SK-N-SH (cell line): ENCODE measurements at regions of chr1 and their contacts with region 1.

Region 1: GRCh38 chr1:40143891-40144575 is 17.2 kb upstream of the RLF start:
- DNase-seq: peak; percentile 60
- H3K4me3 ChIP-seq: no peak overlapping the region; a peak in 2 of 4 replicates
- H3K27ac ChIP-seq: no peak overlapping the region
- H3K4me1 ChIP-seq: peaks cover 0 to 8% of the 10 kb centered on the region in 2 experiments; a peak in 1 of 4 replicates
- H3K27me3 ChIP-seq: no peaks in the 10 kb centered on the region; the same call in 1 of the 2 replicates
- CTCF ChIP-seq: peak; percentile 81
- EP300 ChIP-seq: no peak
- RAD21 ChIP-seq: peak; percentile 88

Region 2: DNA sequence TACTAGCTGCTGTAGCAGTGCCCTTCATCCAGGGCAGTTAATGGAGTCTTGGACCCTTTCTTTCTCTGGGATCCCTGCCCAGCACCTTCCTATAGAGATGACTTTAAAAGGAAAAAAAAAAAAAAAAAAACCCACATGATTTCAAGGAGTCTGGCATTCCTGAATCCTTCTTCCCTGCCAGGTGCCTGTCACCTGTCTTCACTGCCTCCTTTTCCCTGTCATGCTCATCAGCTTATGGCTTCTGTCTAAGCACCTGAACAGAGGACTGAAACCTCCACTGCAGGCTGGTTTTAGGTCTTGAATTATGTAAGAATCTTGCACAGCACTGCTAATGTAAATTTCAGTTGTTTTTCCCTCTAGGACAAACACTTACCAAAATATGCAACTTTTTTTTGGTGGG is 71.9 kb before region 1 on chr1:
- CTCF ChIA-PET with region 1: interaction called, 11 read pairs
- POLR2A ChIA-PET with region 1: no interaction called
- DNase-seq: no peak
- H3K4me3 ChIP-seq: no peak overlapping the region
- H3K27ac ChIP-seq: no peak overlapping the region
- H3K4me1 ChIP-seq: peaks cover 0 to 4% of the 10 kb centered on the region in 2 experiments; a peak in 1 of 4 replicates
- H3K27me3 ChIP-seq: no peaks in the 10 kb centered on the region
- CTCF ChIP-seq: no peak
- EP300 ChIP-seq: no peak
- RAD21 ChIP-seq: no peak

Region 3: DNA sequence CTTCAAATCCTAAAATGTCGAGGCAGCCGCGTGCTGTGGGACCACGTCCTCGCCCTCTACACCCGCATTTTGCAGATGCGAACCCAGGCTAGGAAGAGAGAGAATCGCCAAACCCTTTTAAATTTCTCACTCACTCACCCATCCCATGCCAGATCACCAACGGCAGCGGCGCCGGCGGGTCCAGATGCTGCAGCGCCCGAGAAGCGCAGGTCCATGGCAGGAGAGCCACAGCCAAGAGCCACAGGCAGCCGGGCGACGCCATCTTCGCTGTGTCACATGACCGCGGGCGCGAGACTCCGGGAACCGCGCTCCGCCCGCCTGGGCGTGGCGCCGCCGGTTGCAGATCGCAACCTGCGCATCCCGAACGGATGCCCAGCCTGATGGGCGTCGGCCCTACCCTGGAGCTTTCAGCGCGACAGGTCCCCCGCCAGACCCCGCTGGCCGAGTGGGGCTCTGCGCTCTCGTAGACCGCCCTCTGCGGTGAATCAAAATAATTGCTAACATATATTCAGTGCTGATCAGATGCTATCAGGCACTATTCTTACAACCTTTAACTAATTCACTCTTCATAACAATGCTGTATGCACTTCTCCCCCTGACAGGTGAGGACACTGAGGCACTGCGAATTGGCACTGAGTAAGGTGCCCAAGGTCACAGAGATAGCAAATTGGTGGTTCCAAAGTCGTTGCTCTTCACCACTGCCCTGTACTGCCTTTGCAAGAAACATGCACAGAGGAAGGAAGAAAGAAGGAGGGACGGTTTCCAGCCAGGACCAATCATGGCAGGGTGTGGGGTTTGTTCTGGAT is 46.9 kb before region 1 on chr1 and contains the start of gene PPT1:
- CTCF ChIA-PET with region 1: interaction called, 14 read pairs
- POLR2A ChIA-PET with region 1: no interaction called
- DNase-seq: peak; percentile 90
- H3K4me3 ChIP-seq: peak within 1 kb of the TSS; percentile 85 to 92
- H3K27ac ChIP-seq: peak within 1 kb of the TSS in 1 of 2 experiments; percentile 78; a peak in 3 of 4 replicates
- H3K4me1 ChIP-seq: peaks cover 0 to 12% of the 10 kb centered on the region in 2 experiments; a peak in 2 of 4 replicates
- H3K27me3 ChIP-seq: no peaks in the 10 kb centered on the region
- CTCF ChIP-seq: peak; percentile 35
- EP300 ChIP-seq: peak in 1 of 2 experiments; percentile 8; a peak in 1 of 4 replicates
- RAD21 ChIP-seq: no peak
- polyA plus RNA-seq, gene PPT1: 26.0 and 37.6 TPM in 2 replicates

Region 4: DNA sequence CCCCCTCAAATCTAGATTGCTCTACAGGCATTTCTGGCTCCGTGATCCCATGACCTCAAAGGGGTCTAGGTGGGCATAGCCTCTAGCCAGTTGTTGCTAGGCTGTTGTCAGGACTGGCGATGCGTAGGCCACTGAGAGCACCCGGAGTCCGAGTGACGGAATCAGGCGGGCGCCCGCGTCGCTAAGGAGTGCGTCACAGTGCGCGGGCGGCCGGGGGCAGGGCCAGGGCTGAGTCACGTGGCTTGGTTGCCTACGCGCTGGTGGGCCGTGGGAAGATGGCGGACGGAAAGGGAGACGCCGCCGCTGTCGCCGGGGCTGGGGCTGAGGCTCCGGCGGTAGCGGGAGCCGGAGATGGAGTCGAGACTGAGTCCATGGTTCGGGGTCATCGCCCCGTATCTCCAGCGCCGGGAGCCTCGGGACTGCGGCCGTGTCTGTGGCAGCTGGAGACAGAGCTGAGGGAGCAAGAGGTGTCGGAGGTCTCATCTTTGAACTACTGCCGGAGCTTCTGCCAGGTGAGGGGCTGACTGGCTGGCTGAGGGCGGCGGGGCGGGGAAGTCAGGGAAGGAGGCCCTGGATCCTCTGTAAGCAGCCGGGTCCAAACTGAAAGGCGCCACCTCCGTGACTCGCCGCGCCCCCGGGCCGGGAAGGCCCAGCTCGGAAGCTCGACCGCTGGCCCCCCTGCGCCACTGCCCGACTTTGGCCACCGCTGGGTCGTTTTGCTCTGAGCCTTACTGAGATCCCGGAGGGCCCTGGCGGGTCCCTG is 17.3 kb after region 1 on chr1 and contains the start of gene RLF:
- CTCF ChIA-PET with region 1: interaction called, 14 read pairs
- POLR2A ChIA-PET with region 1: no interaction called
- DNase-seq: peak; percentile 96
- H3K4me3 ChIP-seq: peak within 1 kb of the TSS; percentile 74 to 96
- H3K27ac ChIP-seq: peak within 1 kb of the TSS; percentile 89 to 92
- H3K4me1 ChIP-seq: peaks cover 4 to 9% of the 10 kb centered on the region in 2 experiments; a peak in 3 of 4 replicates
- H3K27me3 ChIP-seq: no peaks in the 10 kb centered on the region
- CTCF ChIP-seq: no peak; the same call in 1 of the 2 replicates
- EP300 ChIP-seq: peak in 1 of 2 experiments; percentile 38; a peak in 1 of 4 replicates
- RAD21 ChIP-seq: no peak
- polyA plus RNA-seq, gene RLF: 2.3 and 3.0 TPM in 2 replicates

Region 5: GRCh38 chr1:40315239-40315794 is 171.3 kb after region 1 on chr1:
- CTCF ChIA-PET with region 1: interaction called, 27 read pairs
- POLR2A ChIA-PET with region 1: no interaction called
- DNase-seq: peak; percentile 92
- H3K4me3 ChIP-seq: peak overlapping the region; percentile 29 to 47; a peak in 3 of 4 replicates
- H3K27ac ChIP-seq: no peak overlapping the region
- H3K4me1 ChIP-seq: peaks cover 0 to 6% of the 10 kb centered on the region in 2 experiments; a peak in 1 of 4 replicates
- H3K27me3 ChIP-seq: no peaks in the 10 kb centered on the region; the same call in 1 of the 2 replicates
- CTCF ChIP-seq: peak; percentile 75
- EP300 ChIP-seq: no peak
- RAD21 ChIP-seq: peak; percentile 58

Region 6: DNA sequence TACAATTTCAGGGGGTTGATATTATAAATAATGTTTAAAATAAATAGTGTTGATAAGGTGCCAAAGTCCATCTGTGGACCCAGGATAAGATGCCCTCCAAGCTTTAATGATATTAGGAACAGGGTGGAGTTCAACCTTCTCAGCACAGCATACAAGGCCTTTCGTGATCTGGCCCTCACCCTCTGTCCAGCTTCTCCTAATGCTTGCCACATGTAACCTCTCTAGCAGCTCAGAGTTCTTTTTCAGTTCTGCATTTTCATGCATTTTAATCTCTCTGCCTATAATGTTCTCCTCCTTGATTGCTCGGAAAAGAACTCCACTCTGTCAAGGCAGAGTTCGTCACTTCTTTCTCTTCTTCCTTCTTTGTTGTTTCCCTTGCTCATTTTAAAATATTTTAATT is 208.1 kb after region 1 on chr1:
- CTCF ChIA-PET with region 1: interaction called, 10 read pairs
- POLR2A ChIA-PET with region 1: no interaction called
- DNase-seq: no peak
- H3K4me3 ChIP-seq: no peak overlapping the region
- H3K27ac ChIP-seq: no peak overlapping the region
- H3K4me1 ChIP-seq: no peaks in the 10 kb centered on the region
- H3K27me3 ChIP-seq: no peaks in the 10 kb centered on the region
- CTCF ChIP-seq: no peak
- EP300 ChIP-seq: no peak
- RAD21 ChIP-seq: no peak

Region 7: DNA sequence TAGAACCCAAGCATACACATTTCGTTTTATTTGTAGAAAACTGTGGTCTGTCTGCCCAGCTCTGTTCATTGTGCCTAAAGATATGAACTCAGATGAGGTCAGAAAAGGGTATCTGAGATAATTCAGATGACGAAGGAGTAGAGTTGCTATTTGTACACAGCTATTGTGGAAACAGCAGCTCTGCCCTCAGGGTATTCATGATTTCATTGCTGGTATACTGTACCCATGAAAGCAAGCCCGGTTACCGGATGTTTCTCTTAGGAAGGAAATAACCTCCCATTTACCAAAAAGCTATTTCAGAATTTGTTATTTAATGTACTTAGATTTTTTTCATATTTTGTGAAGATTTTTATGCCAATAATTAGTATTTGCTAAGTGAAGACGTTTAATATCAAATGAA is 267.3 kb after region 1 on chr1:
- CTCF ChIA-PET with region 1: interaction called, 69 read pairs
- POLR2A ChIA-PET with region 1: no interaction called
- DNase-seq: peak; percentile 70
- H3K4me3 ChIP-seq: no peak overlapping the region
- H3K27ac ChIP-seq: peak overlapping the region in 1 of 2 experiments; percentile 72; a peak in 2 of 4 replicates
- H3K4me1 ChIP-seq: no peaks in the 10 kb centered on the region; a peak in 1 of 4 replicates
- H3K27me3 ChIP-seq: no peaks in the 10 kb centered on the region
- CTCF ChIP-seq: no peak
- EP300 ChIP-seq: no peak
- RAD21 ChIP-seq: no peak